Calu3 (cell line): ENCODE measurements at regions of chr12 and their contacts with region 1.

Region 1: DNA sequence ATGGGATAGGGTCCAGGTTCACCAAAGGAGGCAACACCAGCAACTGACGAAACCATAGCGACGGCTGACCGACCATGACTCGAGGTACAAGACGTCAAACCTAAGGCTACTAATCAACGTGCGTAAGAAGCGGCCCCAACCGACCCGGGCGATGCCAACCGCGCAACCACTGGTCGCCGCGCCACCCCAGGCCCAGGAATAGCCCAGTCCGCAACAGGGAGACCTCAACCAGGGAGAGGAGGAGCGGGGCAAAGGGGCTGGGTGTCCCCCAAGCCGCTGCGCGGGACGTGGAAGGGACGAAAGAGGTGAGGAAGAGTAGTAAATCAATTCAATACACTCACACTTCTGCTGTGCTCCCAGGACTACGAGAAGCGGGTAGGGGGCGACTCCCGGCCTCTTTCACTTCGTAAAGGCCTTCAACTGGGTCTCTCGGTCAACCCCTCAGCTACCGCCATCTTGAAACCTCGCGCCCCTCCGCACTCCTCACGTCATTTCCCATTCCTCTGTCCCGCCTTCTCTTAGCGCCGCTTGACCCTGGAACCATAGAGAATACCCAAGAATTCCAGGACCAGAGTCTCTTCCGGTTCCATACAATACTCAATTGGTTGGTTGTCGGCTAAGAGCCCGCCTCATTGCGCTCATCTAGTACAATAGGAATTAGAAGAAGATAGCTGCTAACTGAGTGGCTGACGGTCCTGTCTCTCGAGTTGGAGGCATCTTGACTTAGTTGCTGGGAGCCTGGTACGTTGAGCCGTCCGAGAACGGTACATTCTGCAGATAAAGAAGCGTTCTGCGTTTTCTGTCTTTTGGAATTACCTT is at the starts of genes C12orf60 and WBP11:
- DNase-seq: peak; percentile 88
- H3K4me3 Mint-ChIP-seq: no peak within 1 kb of the TSS
- H3K27ac Mint-ChIP-seq: no peak within 1 kb of the TSS
- H3K4me1 Mint-ChIP-seq: peaks cover 17% of the 10 kb centered on the region
- H3K27me3 Mint-ChIP-seq: no peaks in the 10 kb centered on the region
- CTCF ChIP-seq: no peak
- total RNA-seq, gene C12orf60: 0.95 and 1.2 TPM in 2 replicates
- total RNA-seq, gene WBP11: 75.9 and 97.4 TPM in 2 replicates

Region 2: DNA sequence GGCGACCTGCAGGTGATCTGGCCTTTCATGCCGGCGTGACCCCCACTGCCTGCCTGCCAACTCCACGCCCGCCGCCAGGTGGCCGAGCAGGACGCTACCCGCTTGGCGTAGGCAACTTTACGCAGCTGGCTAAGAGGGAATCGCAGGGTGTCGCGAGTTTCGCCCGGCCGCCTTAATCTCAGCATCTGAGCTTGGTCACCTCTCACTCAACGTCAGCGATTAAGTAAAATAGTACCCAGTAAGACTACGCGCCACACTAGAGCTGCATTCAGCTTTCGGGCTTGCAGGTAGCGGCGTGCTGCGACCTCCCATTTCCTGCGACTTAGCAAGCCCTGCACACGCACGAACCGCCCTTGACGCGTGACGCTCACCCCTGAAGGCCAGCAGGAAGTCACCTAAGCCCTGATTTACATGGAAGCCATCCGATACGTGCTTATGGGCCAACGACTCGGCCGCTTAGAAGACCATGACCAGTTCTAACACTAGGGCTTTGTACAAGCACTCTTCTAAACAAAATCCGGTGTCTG is 33.2 kb before region 1 on chr12:
- CTCF ChIA-PET with region 1: interaction called, 18 read pairs
- intact Hi-C with region 1: no loop called
- DNase-seq: peak; percentile 92
- H3K4me3 Mint-ChIP-seq: peak overlapping the region; percentile 94
- H3K27ac Mint-ChIP-seq: peak overlapping the region; percentile 98
- H3K4me1 Mint-ChIP-seq: peaks cover 11% of the 10 kb centered on the region
- H3K27me3 Mint-ChIP-seq: no peaks in the 10 kb centered on the region
- CTCF ChIP-seq: peak; percentile 81